ENCODE measurements at regions of chr20 and their contacts with region 1.

Region 1: GRCh38 chr20:59948828-59949720 is 8.9 kb downstream of the FAM217B start:
- DNase-seq: peak; percentile 44 to 49 (median 44)
- H3K4me3 ChIP-seq: no peak overlapping the region
- H3K4me3 Mint-ChIP-seq: no peak overlapping the region
- H3K27ac ChIP-seq: peak overlapping the region in 1 of 2 donors; percentile 64
- H3K27ac Mint-ChIP-seq: peak overlapping the region in 5 of 7 donors; percentile 41 to 82 (median 71)
- H3K4me1 ChIP-seq: peaks cover 18 to 26% of the 10 kb centered on the region in 2 donors
- H3K4me1 Mint-ChIP-seq: peaks cover 38% of the 10 kb centered on the region
- H3K27me3 ChIP-seq: no peaks in the 10 kb centered on the region
- H3K27me3 Mint-ChIP-seq: peaks cover 0 to 3% (median 0%) of the 10 kb centered on the region in 3 donors
- CTCF ChIP-seq: peak; percentile 83

Region 2: GRCh38 chr20:59912609-59913008 is 36.5 kb before region 1 on chr20:
- intact Hi-C with region 1: no loop called
- DNase-seq: peak; percentile 36 to 68 (median 37)
- H3K4me3 ChIP-seq: no peak overlapping the region
- H3K4me3 Mint-ChIP-seq: no peak overlapping the region
- H3K27ac ChIP-seq: no peak overlapping the region
- H3K27ac Mint-ChIP-seq: peak overlapping the region in 1 of 7 donors; percentile 31
- H3K4me1 ChIP-seq: no peaks in the 10 kb centered on the region
- H3K4me1 Mint-ChIP-seq: peaks cover 4% of the 10 kb centered on the region
- H3K27me3 ChIP-seq: no peaks in the 10 kb centered on the region
- H3K27me3 Mint-ChIP-seq: peaks cover 0 to 2% (median 0%) of the 10 kb centered on the region in 3 donors
- CTCF ChIP-seq: no peak

Region 3: GRCh38 chr20:60262967-60263603 is 314.0 kb after region 1 on chr20:
- intact Hi-C with region 1: loop called in 1 of 2 experiments (anchors 2 kb)
- DNase-seq: peak; percentile 45 to 52 (median 51)
- H3K4me3 ChIP-seq: no peak overlapping the region
- H3K4me3 Mint-ChIP-seq: no peak overlapping the region
- H3K27ac ChIP-seq: no peak overlapping the region
- H3K27ac Mint-ChIP-seq: no peak overlapping the region
- H3K4me1 ChIP-seq: no peaks in the 10 kb centered on the region
- H3K4me1 Mint-ChIP-seq: peaks cover 14% of the 10 kb centered on the region
- H3K27me3 ChIP-seq: no peaks in the 10 kb centered on the region
- H3K27me3 Mint-ChIP-seq: no peaks in the 10 kb centered on the region
- CTCF ChIP-seq: peak; percentile 96